ENCODE measurements at regions of chr7 and their contacts with region 1.

Region 1: GRCh38 chr7:50369143-50370026 is 64.9 kb downstream of the IKZF1 start:
- DNase-seq: peak; percentile 62
- ATAC-seq: no peak
- H3K4me3 Mint-ChIP-seq: peak overlapping the region; percentile 10
- H3K27ac Mint-ChIP-seq: peak overlapping the region; percentile 88
- H3K4me1 Mint-ChIP-seq: peaks cover 96% of the 10 kb centered on the region
- H3K27me3 Mint-ChIP-seq: no peaks in the 10 kb centered on the region

Region 2: DNA sequence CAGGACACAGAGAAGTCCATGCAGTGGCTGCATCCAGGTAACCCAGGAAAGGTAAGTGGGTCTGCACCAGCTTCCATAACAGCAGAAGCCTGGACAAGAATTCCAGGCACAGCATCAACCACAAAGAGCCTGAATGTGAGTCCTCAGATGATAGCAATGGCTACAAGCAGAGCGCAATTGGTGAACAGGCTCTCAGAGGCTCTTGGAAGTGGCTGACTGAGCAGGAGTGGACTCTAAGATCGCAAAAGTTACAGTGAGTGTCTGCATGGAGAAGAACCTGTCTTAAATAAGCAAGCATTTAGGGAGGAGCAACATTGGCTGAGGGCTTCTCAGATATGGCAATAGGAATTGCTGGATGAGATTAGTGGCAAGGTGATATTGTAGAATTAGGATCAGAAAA is 637.5 kb before region 1 on chr7:
- CTCF ChIA-PET with region 1: no interaction called
- POLR2A ChIA-PET with region 1: no interaction called
- intact Hi-C with region 1: no loop called
- DNase-seq: no peak
- ATAC-seq: no peak
- H3K4me3 Mint-ChIP-seq: no peak overlapping the region
- H3K27ac Mint-ChIP-seq: no peak overlapping the region
- H3K4me1 Mint-ChIP-seq: no peaks in the 10 kb centered on the region
- H3K27me3 Mint-ChIP-seq: peaks cover 7% of the 10 kb centered on the region

Region 3: DNA sequence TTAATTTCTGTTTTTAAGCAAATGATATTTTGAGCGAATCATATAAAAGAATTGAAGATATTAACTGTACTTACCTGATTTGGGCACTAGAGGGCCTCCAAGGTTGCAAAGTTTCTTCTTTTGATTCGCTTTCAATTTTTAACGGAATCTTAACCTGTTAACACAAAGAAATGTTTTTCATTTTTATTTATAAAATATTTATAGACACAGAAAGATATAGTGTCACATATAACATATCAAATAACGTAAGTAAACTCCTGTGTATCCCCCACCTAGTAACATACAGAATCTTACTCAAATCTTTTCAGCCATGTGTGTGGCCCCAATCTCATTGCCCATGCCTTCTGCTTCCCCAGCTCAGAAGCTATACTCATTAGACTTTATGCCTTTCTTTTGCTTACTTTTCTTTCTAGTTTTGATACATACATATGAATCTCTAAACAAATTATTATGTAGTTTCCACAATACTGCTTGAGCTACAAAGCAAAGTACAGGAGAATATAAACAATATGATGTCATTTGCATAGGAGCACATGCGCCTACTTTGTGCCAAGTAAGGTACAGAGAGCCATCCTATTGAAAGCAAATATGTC is 226.9 kb before region 1 on chr7:
- CTCF ChIA-PET with region 1: interaction called, 8 read pairs
- POLR2A ChIA-PET with region 1: interaction called, 3 read pairs
- intact Hi-C with region 1: loop called (anchors 1 kb)
- DNase-seq: peak; percentile 51
- ATAC-seq: peak; percentile 63
- H3K4me3 Mint-ChIP-seq: peak overlapping the region; percentile 53
- H3K27ac Mint-ChIP-seq: peak overlapping the region; percentile 94
- H3K4me1 Mint-ChIP-seq: peaks cover 43% of the 10 kb centered on the region
- H3K27me3 Mint-ChIP-seq: no peaks in the 10 kb centered on the region

Region 4: DNA sequence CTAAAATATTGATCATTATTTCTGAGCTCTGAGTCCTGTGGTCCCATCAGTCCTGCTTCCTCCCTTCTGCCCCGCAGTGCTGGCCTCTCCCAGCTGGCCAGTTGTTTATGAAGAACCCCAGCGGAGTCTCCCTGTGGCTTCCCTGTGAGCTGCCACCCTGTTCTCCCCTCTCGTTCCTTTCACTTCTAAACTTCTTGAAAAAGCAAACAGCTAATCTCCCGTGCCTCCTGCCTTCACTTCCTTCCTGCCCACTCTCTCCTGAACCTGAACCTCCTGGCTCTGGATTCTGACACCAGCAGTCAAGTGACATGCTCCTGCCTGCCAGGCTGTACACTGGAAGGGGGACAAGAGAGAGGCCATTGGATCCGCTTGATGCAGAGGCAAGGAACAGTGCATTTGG is 212.7 kb before region 1 on chr7:
- CTCF ChIA-PET with region 1: interaction called, 13 read pairs
- POLR2A ChIA-PET with region 1: no interaction called
- intact Hi-C with region 1: no loop called
- DNase-seq: no peak
- ATAC-seq: no peak
- H3K4me3 Mint-ChIP-seq: peak overlapping the region; percentile 51
- H3K27ac Mint-ChIP-seq: peak overlapping the region; percentile 96
- H3K4me1 Mint-ChIP-seq: peaks cover 48% of the 10 kb centered on the region
- H3K27me3 Mint-ChIP-seq: no peaks in the 10 kb centered on the region

Region 5: DNA sequence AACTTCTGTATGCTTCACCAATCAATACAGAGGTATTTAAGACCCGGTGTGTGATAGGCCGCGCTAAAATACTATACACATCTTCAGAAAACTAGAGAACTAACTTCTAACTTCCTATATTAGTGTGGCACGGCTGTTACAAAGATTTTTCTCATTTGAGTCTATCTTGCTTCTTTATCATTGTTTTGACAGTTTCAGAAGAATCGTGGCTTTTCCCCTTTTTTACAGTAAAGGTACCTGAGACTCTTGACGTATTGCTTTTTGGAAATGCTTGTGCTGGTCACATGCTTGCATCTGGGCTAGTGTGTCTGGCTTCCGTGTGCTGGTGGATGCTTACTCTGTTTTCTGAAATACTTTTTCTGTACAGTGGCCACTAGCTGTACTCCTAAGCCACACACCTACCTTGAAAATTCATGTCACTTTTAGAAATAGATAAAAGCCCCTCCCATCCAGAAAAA is 52.1 kb before region 1 on chr7:
- CTCF ChIA-PET with region 1: interaction called, 96 read pairs
- POLR2A ChIA-PET with region 1: interaction called, 20 read pairs
- intact Hi-C with region 1: loop called (anchors 1 kb)
- DNase-seq: peak; percentile 73
- ATAC-seq: peak; percentile 82
- H3K4me3 Mint-ChIP-seq: peak overlapping the region; percentile 95
- H3K27ac Mint-ChIP-seq: peak overlapping the region; percentile 100
- H3K4me1 Mint-ChIP-seq: peaks cover 93% of the 10 kb centered on the region
- H3K27me3 Mint-ChIP-seq: no peaks in the 10 kb centered on the region

Region 6: GRCh38 chr7:50349963-50350944 is 19.1 kb before region 1 on chr7:
- CTCF ChIA-PET with region 1: interaction called, 214 read pairs
- POLR2A ChIA-PET with region 1: interaction called, 86 read pairs
- intact Hi-C with region 1: loop called (anchors 1 kb)
- DNase-seq: peak; percentile 93
- ATAC-seq: peak; percentile 71
- H3K4me3 Mint-ChIP-seq: peak overlapping the region; percentile 61
- H3K27ac Mint-ChIP-seq: peak overlapping the region; percentile 100
- H3K4me1 Mint-ChIP-seq: peaks cover 97% of the 10 kb centered on the region
- H3K27me3 Mint-ChIP-seq: no peaks in the 10 kb centered on the region

Region 7: GRCh38 chr7:50418086-50418515 is 48.7 kb after region 1 on chr7:
- CTCF ChIA-PET with region 1: interaction called, 15 read pairs
- POLR2A ChIA-PET with region 1: no interaction called
- intact Hi-C with region 1: loop called in 1 of 2 experiments (anchors 5 kb)
- DNase-seq: peak; percentile 89
- ATAC-seq: peak; percentile 96
- H3K4me3 Mint-ChIP-seq: no peak overlapping the region
- H3K27ac Mint-ChIP-seq: no peak overlapping the region
- H3K4me1 Mint-ChIP-seq: peaks cover 24% of the 10 kb centered on the region
- H3K27me3 Mint-ChIP-seq: no peaks in the 10 kb centered on the region

Region 8: GRCh38 chr7:51123322-51124029 is 754.1 kb after region 1 on chr7:
- CTCF ChIA-PET with region 1: no interaction called
- POLR2A ChIA-PET with region 1: no interaction called
- intact Hi-C with region 1: no loop called
- DNase-seq: peak; percentile 92
- ATAC-seq: peak; percentile 99
- H3K4me3 Mint-ChIP-seq: peak overlapping the region; percentile 10
- H3K27ac Mint-ChIP-seq: peak overlapping the region; percentile 88
- H3K4me1 Mint-ChIP-seq: peaks cover 40% of the 10 kb centered on the region
- H3K27me3 Mint-ChIP-seq: no peaks in the 10 kb centered on the region

Region 9: GRCh38 chr7:51162724-51163329 is 793.4 kb after region 1 on chr7:
- CTCF ChIA-PET with region 1: no interaction called
- POLR2A ChIA-PET with region 1: no interaction called
- intact Hi-C with region 1: no loop called
- DNase-seq: peak; percentile 89
- ATAC-seq: peak; percentile 96
- H3K4me3 Mint-ChIP-seq: no peak overlapping the region
- H3K27ac Mint-ChIP-seq: no peak overlapping the region
- H3K4me1 Mint-ChIP-seq: peaks cover 9% of the 10 kb centered on the region
- H3K27me3 Mint-ChIP-seq: peaks cover 6% of the 10 kb centered on the region

Measured in activated CD4-positive, alpha-beta T cell treated with anti-CD3 and anti-CD28 coated beads for 36 hours (primary cell).